CD4-positive, alpha-beta memory T cell (primary cell): ENCODE measurements at regions of chr14 and their contacts with region 1.

Region 1: GRCh38 chr14:69398053-69398817 is at the starts of genes ERH and SLC39A9:
- DNase-seq: peak; percentile 96 to 98 (median 96)
- H3K4me3 ChIP-seq: peak within 1 kb of the TSS; percentile 86 to 91
- H3K4me3 Mint-ChIP-seq: peak within 1 kb of the TSS; percentile 91 to 99 (median 96)
- H3K27ac ChIP-seq: peak within 1 kb of the TSS; percentile 87
- H3K27ac Mint-ChIP-seq: peak within 1 kb of the TSS; percentile 98 to 100 (median 100)
- H3K4me1 ChIP-seq: peaks cover 81% of the 10 kb centered on the region
- H3K4me1 Mint-ChIP-seq: peaks cover 41 to 89% (median 59%) of the 10 kb centered on the region in 4 donors
- H3K27me3 ChIP-seq: no peaks in the 10 kb centered on the region
- H3K27me3 Mint-ChIP-seq: no peaks in the 10 kb centered on the region
- total RNA-seq, gene ERH: 118 to 135 TPM
- total RNA-seq, gene SLC39A9: 33.7 to 38.6 TPM

Region 2: GRCh38 chr14:67674481-67675169 is 1723.6 kb before region 1 on chr14 and contains the start of gene VTI1B:
- CTCF ChIA-PET with region 1: no interaction called
- POLR2A ChIA-PET with region 1: interaction called, 3 read pairs
- intact Hi-C with region 1: loop called (anchors 2 kb)
- DNase-seq: peak; percentile 78 to 85 (median 81)
- H3K4me3 ChIP-seq: peak within 1 kb of the TSS; percentile 66 to 96
- H3K4me3 Mint-ChIP-seq: peak within 1 kb of the TSS; percentile 86 to 94 (median 91)
- H3K27ac ChIP-seq: peak within 1 kb of the TSS; percentile 87
- H3K27ac Mint-ChIP-seq: peak within 1 kb of the TSS; percentile 72 to 95 (median 92)
- H3K4me1 ChIP-seq: peaks cover 48% of the 10 kb centered on the region
- H3K4me1 Mint-ChIP-seq: peaks cover 23 to 54% (median 39%) of the 10 kb centered on the region in 4 donors
- H3K27me3 ChIP-seq: no peaks in the 10 kb centered on the region
- H3K27me3 Mint-ChIP-seq: no peaks in the 10 kb centered on the region
- total RNA-seq, gene VTI1B: 71.1 to 72.6 TPM

Region 3: DNA sequence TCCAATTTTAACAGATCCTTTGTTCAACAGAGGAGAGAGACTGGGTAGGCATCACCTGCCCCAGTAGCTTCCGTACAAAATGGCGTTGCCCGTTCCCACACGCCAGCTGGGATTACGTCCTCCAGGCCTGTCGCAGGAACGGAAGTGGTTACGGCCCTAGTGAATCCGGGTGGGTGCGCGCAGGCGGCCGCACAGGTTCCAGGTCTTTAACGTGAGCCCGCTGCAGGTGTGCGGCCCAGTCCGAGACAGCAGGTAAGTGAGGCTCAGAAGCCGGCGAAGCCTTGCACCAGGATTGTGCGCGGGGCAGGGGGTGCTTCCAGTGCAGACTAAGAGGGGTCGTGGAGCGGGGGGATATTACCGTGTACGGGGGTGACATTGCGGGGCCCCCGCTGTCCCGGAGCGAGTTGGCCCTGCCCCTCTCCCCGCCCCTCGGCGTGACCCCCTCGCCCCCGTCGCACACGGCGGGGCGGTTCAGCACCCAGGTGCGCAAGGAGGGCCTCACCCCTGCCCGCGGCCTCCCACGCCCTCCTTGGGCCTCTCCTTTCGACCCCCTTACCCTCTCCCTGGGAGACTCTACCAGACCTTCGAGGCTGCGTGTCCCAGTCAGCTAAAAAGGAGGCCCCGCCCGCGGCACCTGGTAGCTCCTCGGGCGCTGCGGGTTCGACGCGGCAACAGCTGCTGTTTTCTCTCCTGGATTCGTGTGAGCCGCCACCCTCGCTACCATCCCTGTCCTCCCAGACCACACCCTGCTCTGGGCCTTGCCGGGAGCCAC is 206.7 kb before region 1 on chr14 and contains the start of gene EXD2:
- CTCF ChIA-PET with region 1: no interaction called
- POLR2A ChIA-PET with region 1: interaction called, 14 read pairs
- intact Hi-C with region 1: loop called (anchors 5 kb)
- DNase-seq: peak; percentile 48 to 74 (median 65)
- H3K4me3 ChIP-seq: peak within 1 kb of the TSS; percentile 55 to 84
- H3K4me3 Mint-ChIP-seq: peak within 1 kb of the TSS; percentile 91 to 97 (median 94)
- H3K27ac ChIP-seq: peak within 1 kb of the TSS; percentile 50
- H3K27ac Mint-ChIP-seq: peak within 1 kb of the TSS; percentile 82 to 94 (median 92)
- H3K4me1 ChIP-seq: peaks cover 10% of the 10 kb centered on the region
- H3K4me1 Mint-ChIP-seq: peaks cover 15 to 26% (median 23%) of the 10 kb centered on the region in 4 donors
- H3K27me3 ChIP-seq: no peaks in the 10 kb centered on the region
- H3K27me3 Mint-ChIP-seq: no peaks in the 10 kb centered on the region
- total RNA-seq, gene EXD2: 14.3 to 15.7 TPM

Region 4: DNA sequence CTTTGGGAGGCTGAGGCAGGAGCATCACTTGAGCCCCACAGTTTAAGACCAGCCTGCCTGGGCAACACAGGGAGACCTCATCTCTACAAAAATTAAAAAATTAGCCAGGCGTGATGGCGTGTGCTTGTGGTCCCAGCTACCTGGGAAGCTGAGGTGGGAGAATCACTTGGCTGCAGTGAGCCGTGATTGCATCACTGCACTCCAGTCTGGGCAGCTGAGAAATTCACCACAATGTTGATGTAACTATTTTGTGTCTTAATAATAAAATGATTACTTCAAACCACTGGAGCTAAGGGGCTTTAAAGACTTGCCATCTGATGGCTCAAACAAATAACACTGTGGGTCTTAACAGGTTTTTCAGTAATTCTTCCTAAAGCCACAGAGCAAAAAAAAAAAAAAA is 10.9 kb before region 1 on chr14:
- CTCF ChIA-PET with region 1: interaction called, 5 read pairs
- POLR2A ChIA-PET with region 1: interaction called, 20 read pairs
- intact Hi-C with region 1: no loop called
- DNase-seq: no peak
- H3K4me3 ChIP-seq: no peak overlapping the region
- H3K4me3 Mint-ChIP-seq: no peak overlapping the region
- H3K27ac ChIP-seq: no peak overlapping the region
- H3K27ac Mint-ChIP-seq: peak overlapping the region in 1 of 7 donors; percentile 41
- H3K4me1 ChIP-seq: peaks cover 32% of the 10 kb centered on the region
- H3K4me1 Mint-ChIP-seq: peaks cover 37 to 63% (median 48%) of the 10 kb centered on the region in 4 donors
- H3K27me3 ChIP-seq: no peaks in the 10 kb centered on the region
- H3K27me3 Mint-ChIP-seq: no peaks in the 10 kb centered on the region

Region 5: DNA sequence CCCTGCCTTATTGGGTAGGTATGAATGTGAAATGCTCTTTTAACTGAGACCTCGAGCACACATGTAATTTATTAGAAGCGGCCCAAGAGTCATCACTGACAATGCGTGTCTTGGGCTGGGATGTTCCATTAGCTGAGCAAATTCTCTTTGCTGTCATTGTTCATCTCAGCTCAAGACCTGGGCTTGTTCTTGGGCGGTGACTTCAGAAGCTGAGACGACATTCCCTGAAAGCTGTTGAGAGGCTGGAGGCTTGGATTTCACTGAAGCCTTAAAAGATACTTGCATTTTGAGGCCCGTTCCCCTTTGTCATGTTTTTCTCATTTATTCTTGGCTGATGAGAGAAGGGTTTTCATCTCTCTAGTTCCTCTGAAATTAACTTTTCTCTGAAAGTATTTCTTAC is 196.6 kb after region 1 on chr14:
- CTCF ChIA-PET with region 1: no interaction called
- POLR2A ChIA-PET with region 1: no interaction called
- intact Hi-C with region 1: no loop called
- DNase-seq: no peak
- H3K4me3 ChIP-seq: no peak overlapping the region
- H3K4me3 Mint-ChIP-seq: no peak overlapping the region
- H3K27ac ChIP-seq: no peak overlapping the region
- H3K27ac Mint-ChIP-seq: no peak overlapping the region
- H3K4me1 ChIP-seq: no peaks in the 10 kb centered on the region
- H3K4me1 Mint-ChIP-seq: no peaks in the 10 kb centered on the region
- H3K27me3 ChIP-seq: no peaks in the 10 kb centered on the region
- H3K27me3 Mint-ChIP-seq: peaks cover 0 to 3% of the 10 kb centered on the region in 2 donors

Region 6: DNA sequence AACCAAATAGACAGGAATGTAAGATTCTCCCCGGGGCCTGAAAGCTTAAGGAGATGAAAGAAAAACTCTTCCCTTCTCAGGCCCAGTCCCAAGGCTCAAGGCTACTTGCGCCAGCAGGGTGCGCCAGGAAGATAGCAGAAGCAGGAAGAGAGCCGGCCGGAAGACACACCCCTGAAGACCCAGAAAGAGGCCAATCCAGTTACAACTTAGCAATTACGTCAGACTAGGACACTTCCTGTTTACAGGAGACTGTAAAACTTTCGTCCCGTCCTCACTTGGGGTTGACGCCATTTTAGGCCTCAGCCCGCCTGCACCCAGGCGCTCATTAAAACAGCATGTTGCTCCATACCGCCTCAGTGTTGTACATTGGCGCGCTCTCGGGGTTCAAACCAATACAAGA is 951.8 kb after region 1 on chr14:
- CTCF ChIA-PET with region 1: no interaction called
- POLR2A ChIA-PET with region 1: no interaction called
- intact Hi-C with region 1: no loop called
- DNase-seq: no peak
- H3K4me3 ChIP-seq: no peak overlapping the region
- H3K4me3 Mint-ChIP-seq: no peak overlapping the region
- H3K27ac ChIP-seq: no peak overlapping the region
- H3K27ac Mint-ChIP-seq: no peak overlapping the region
- H3K4me1 ChIP-seq: peaks cover 8% of the 10 kb centered on the region
- H3K4me1 Mint-ChIP-seq: peaks cover 9 to 22% (median 19%) of the 10 kb centered on the region in 4 donors
- H3K27me3 ChIP-seq: no peaks in the 10 kb centered on the region
- H3K27me3 Mint-ChIP-seq: no peaks in the 10 kb centered on the region